ENCODE measurements at regions of chr14 and their contacts with region 1.

Region 1: DNA sequence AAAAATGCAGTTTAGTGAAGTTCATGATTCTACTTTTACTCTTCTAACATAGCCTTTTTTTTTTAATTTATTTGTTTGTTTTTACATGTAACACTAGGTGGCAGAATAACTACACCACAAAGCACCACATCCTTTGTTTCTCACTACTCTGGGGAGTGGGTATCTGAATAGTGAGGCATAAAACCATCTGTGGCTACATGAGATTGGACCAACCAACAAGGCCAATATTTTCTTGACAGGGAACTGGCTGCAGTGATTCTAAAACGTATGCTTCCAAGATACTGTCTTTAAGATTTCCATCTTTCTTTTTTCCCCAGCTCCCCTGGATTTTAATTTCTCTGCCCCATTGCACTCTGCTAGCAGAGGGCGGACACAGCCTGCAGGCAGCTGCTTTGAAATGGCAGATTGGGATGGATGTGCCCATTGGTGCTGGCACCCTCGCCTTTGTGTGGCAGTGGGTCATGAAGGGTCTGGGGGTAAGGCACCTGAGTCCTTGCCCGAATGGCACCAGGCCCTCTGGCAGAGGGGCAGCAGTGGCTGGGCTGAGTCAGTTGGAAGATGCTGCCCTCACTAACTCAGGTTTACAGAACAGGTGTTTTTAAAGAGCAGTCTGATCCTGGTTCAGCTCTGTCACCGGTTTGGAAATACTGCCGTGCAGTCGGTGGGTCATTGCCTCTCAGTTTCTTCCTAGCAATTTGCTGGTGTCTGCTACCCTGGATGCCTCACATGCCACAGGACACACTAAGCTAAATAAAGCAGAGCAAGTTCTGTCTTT is 429.1 kb downstream of the RAD51B start:
- DNase-seq: peak in 1 of 2 donors; percentile 80
- ATAC-seq: peak; percentile 73 to 80 (median 73)
- H3K4me3 ChIP-seq: no peak overlapping the region
- H3K4me3 Mint-ChIP-seq: no peak overlapping the region
- H3K27ac ChIP-seq: peak overlapping the region; percentile 38
- H3K27ac Mint-ChIP-seq: peak overlapping the region; percentile 51 to 66
- H3K4me1 ChIP-seq: peaks cover 9% of the 10 kb centered on the region
- H3K4me1 Mint-ChIP-seq: peaks cover 13 to 31% of the 10 kb centered on the region in 2 donors
- H3K27me3 ChIP-seq: no peaks in the 10 kb centered on the region
- H3K27me3 Mint-ChIP-seq: no peaks in the 10 kb centered on the region
- CTCF ChIP-seq: peak; percentile 74

Region 2: DNA sequence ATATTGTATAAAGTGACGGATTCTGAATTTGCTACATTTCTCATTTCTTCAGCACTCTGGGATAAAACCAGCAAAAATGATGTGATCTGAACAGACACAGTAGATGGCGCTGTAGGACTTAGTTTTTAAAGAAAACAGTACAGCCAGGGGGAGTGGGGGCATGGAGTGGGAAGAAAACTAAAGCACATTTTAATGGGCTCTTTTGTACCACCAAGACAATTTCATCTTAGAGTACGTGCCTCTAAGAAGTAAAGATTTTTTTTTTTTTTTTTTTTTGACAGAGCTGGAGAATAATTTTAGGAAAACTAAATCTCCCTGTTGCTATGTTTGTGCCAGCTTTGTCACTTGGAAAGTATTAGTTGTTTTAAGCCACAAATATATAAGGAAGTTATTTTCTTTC is 304.7 kb before region 1 on chr14:
- intact Hi-C with region 1: loop called (anchors 10 kb)
- DNase-seq: peak in 1 of 2 donors; percentile 80
- ATAC-seq: peak; percentile 70 to 79 (median 78)
- H3K4me3 ChIP-seq: no peak overlapping the region
- H3K4me3 Mint-ChIP-seq: no peak overlapping the region
- H3K27ac ChIP-seq: no peak overlapping the region
- H3K27ac Mint-ChIP-seq: no peak overlapping the region
- H3K4me1 ChIP-seq: no peaks in the 10 kb centered on the region
- H3K4me1 Mint-ChIP-seq: no peaks in the 10 kb centered on the region
- H3K27me3 ChIP-seq: no peaks in the 10 kb centered on the region
- H3K27me3 Mint-ChIP-seq: no peaks in the 10 kb centered on the region
- CTCF ChIP-seq: peak; percentile 78

Region 3: DNA sequence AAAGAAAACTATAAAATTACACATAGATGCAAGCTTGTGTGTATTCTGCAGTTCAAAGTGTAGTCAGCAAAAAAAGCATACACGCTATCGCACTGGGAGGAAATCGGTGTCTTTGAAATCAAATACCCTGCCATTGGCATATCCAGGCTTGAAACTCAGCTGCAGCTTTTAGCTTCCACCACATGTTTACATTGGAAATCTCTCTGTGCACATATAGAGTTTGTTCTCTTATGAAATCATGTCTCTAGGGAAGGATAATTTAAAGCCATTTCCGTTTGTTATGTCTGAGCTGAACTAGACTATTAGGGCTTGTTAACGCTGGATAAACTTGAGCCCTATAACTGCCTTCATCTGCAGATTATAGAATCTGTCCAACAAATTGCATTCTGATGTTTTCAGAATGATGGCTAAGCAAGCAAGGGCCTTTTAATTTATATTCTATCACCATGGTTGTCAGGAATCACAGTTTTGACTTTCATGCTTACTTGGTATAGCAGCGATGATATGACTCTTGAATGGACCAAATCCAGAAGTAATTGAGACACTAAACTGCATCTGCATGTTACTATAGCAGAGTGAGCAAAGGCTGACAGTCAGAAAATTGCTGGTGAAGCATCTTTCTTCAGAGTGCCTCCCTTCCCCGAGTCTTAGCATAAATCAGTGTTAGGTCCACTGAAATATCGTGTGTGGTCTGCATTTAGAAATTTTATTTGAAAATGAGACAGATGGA is 101.4 kb after region 1 on chr14:
- intact Hi-C with region 1: loop called (anchors 5 kb)
- DNase-seq: no peak
- ATAC-seq: no peak
- H3K4me3 ChIP-seq: no peak overlapping the region
- H3K4me3 Mint-ChIP-seq: no peak overlapping the region
- H3K27ac ChIP-seq: no peak overlapping the region
- H3K27ac Mint-ChIP-seq: no peak overlapping the region
- H3K4me1 ChIP-seq: no peaks in the 10 kb centered on the region
- H3K4me1 Mint-ChIP-seq: peaks cover 0 to 17% of the 10 kb centered on the region in 2 donors
- H3K27me3 ChIP-seq: no peaks in the 10 kb centered on the region
- H3K27me3 Mint-ChIP-seq: peaks cover 0 to 2% of the 10 kb centered on the region in 2 donors
- CTCF ChIP-seq: no peak

Region 4: DNA sequence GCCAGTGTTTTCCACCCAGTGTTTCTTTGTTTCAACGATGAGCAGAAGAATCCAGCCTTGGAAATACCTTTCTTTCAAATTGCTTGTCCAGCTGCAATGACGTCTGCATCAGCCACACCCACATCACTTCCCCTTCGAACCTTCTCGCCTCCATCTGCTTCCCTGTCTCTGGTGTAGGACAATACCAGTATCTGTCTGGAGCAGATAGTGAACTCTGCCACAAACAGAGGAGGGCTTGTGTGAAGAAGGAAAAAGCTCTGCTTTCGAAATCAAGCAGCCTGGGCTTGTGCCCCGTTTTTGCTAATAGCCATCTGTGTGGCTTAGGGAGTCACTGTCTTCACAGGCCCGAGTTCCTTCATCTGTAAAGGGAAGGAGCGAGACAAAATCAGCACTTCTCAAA is 128.8 kb after region 1 on chr14:
- intact Hi-C with region 1: no loop called
- DNase-seq: peak in 1 of 2 donors; percentile 37
- ATAC-seq: peak in 2 of 3 donors; percentile 32 to 35
- H3K4me3 ChIP-seq: no peak overlapping the region
- H3K4me3 Mint-ChIP-seq: peak overlapping the region; percentile 50
- H3K27ac ChIP-seq: peak overlapping the region; percentile 52
- H3K27ac Mint-ChIP-seq: peak overlapping the region; percentile 65 to 70
- H3K4me1 ChIP-seq: peaks cover 11% of the 10 kb centered on the region
- H3K4me1 Mint-ChIP-seq: peaks cover 44 to 46% of the 10 kb centered on the region in 2 donors
- H3K27me3 ChIP-seq: no peaks in the 10 kb centered on the region
- H3K27me3 Mint-ChIP-seq: no peaks in the 10 kb centered on the region
- CTCF ChIP-seq: no peak

Region 5: DNA sequence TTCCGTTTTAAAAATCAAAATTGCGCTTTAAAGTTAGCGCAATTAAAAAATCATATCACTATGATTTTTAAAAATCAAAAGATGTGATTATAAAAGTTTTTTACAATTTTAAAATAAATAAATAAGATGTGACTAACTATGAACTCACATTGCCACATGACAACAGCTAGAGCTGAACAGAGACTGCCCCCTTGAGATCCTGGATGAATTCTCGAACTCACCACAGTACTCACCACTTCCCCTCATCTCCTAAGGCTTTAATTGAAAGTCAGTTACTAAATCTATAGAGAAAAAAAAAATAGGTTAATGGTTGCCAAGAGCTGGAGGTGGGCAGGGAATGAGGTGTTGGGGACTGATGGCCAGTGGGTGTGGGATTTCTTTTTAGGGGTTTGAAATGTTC is 160.0 kb after region 1 on chr14:
- intact Hi-C with region 1: loop called (anchors 10 kb)
- DNase-seq: peak in 1 of 2 donors; percentile 61
- ATAC-seq: peak; percentile 58 to 82 (median 66)
- H3K4me3 ChIP-seq: no peak overlapping the region
- H3K4me3 Mint-ChIP-seq: no peak overlapping the region
- H3K27ac ChIP-seq: no peak overlapping the region
- H3K27ac Mint-ChIP-seq: peak overlapping the region; percentile 35 to 39
- H3K4me1 ChIP-seq: peaks cover 25% of the 10 kb centered on the region
- H3K4me1 Mint-ChIP-seq: peaks cover 36 to 37% of the 10 kb centered on the region in 2 donors
- H3K27me3 ChIP-seq: no peaks in the 10 kb centered on the region
- H3K27me3 Mint-ChIP-seq: no peaks in the 10 kb centered on the region
- CTCF ChIP-seq: no peak

Region 6: GRCh38 chr14:68458840-68459469 is 210.3 kb after region 1 on chr14:
- intact Hi-C with region 1: no loop called
- DNase-seq: no peak
- ATAC-seq: no peak
- H3K4me3 ChIP-seq: no peak overlapping the region
- H3K4me3 Mint-ChIP-seq: no peak overlapping the region
- H3K27ac ChIP-seq: no peak overlapping the region
- H3K27ac Mint-ChIP-seq: no peak overlapping the region
- H3K4me1 ChIP-seq: no peaks in the 10 kb centered on the region
- H3K4me1 Mint-ChIP-seq: no peaks in the 10 kb centered on the region
- H3K27me3 ChIP-seq: no peaks in the 10 kb centered on the region
- H3K27me3 Mint-ChIP-seq: no peaks in the 10 kb centered on the region
- CTCF ChIP-seq: no peak

Measured in natural killer cell (primary cell).